ENCODE measurements at regions of chr1 and their contacts with region 1.

Region 1: GRCh38 chr1:47710329-47711071 is 272.7 kb downstream of the FOXD2 start:
- DNase-seq: peak; percentile 37
- ATAC-seq: peak; percentile 93
- H3K4me3 ChIP-seq: no peak overlapping the region
- H3K27ac ChIP-seq: no peak overlapping the region
- H3K4me1 ChIP-seq: no peaks in the 10 kb centered on the region; the same call in 1 of the 2 replicates
- H3K27me3 ChIP-seq: peaks cover 61% of the 10 kb centered on the region
- CTCF ChIP-seq: peak; percentile 95
- POLR2A ChIP-seq: 0 out of 2 replicates have a peak, but pooled peaks have one; percentile 32
- RAD21 ChIP-seq: peak; percentile 95

Region 2: GRCh38 chr1:46910790-46911189 is 799.7 kb before region 1 on chr1:
- CTCF ChIA-PET with region 1: no interaction called
- POLR2A ChIA-PET with region 1: no interaction called
- dilution Hi-C with region 1: no loop called
- in situ Hi-C with region 1: no loop called
- intact Hi-C with region 1: no loop called
- DNase-seq: no peak
- ATAC-seq: no peak
- H3K4me3 ChIP-seq: no peak overlapping the region
- H3K27ac ChIP-seq: no peak overlapping the region
- H3K4me1 ChIP-seq: no peaks in the 10 kb centered on the region
- H3K27me3 ChIP-seq: no peaks in the 10 kb centered on the region
- CTCF ChIP-seq: no peak
- POLR2A ChIP-seq: no peak
- RAD21 ChIP-seq: no peak

Region 3: DNA sequence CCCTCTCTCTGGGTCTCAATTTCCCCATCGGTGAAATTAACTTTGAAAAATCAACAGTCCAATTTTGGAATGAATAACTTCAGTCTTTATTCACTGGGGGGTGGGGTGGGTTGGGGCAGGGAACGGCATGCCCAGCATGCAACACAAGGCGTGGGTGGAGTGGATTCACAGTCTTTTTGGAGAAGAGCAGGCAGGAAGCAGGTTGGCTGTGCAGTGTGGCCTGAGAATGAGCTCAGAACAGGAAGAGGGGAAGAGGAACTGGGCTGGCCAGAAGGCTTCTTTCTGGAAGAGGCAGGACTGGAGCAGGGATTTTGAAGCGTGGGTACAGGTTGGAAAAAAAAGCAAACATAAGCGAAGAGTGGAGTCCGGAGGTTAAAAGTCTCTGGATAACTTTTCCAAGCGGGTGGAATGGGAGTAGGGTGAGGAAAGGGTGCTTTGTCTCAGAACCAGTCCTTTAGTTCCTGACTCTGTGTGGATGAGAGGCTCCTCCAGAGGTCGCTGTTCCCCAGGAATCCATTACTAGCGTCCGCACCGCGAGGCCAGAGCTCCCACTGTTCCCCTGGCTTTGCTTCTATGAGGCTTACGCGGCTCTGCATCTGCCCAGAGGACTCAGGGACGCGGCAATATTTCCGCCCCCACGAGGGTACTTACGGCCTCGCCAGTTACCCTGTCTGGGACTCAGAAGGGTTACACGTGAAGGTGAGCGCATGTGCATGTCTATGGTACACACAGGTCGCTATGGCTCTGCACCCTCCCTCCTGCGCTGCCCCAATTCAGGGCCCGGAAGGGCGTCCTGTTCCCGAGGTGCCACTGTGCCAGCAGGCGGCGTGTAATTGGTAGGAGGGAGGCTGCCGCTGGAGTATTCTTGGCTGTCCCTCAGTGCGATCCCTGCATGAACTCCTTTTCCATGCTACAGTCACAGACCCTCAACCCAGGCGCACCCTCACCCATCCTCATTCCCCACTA is 278.1 kb before region 1 on chr1:
- CTCF ChIA-PET with region 1: interaction called, 15 read pairs
- POLR2A ChIA-PET with region 1: no interaction called
- dilution Hi-C with region 1: no loop called
- in situ Hi-C with region 1: no loop called
- intact Hi-C with region 1: loop called (anchors 1 kb)
- DNase-seq: peak; percentile 79
- ATAC-seq: peak; percentile 67
- H3K4me3 ChIP-seq: no peak overlapping the region
- H3K27ac ChIP-seq: no peak overlapping the region
- H3K4me1 ChIP-seq: peaks cover 12% of the 10 kb centered on the region
- H3K27me3 ChIP-seq: no peaks in the 10 kb centered on the region; the same call in 1 of the 2 replicates
- CTCF ChIP-seq: peak; percentile 89
- POLR2A ChIP-seq: no peak
- RAD21 ChIP-seq: peak; percentile 76

Region 4: DNA sequence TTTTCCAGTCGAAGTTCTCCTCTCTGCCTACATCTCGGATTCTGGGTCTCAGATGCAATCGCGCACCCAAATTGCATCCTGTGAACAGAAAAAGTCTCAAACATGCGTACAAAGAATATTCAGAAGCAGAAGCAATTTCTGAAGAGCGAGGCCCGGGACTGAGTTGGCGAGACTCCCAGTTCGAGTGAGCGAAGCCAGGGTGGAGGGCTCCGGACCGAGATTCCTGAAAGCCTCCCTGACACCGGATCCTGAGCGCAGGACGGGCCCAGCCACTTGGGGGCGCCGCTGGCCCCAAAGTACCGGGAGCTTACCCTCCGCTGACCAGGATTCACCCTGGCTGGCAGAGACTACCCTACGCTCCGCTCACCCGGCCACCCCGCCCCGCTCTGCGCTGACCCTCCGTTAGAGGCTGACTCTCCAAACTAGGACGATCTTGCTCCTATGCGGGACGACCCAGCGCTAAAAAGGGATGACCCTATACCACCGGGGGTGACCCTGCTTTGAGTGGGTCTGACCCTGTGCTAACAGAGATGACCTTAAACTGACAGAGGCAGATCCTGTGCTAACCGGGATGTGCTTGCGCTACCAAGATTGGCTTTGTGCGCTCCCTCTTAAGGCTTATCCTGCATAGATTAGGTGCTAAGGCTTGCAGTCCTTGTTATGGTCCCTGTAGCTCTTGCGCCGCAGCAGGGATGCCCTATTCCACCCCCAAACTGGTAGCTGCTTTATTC is 260.5 kb before region 1 on chr1:
- CTCF ChIA-PET with region 1: interaction called, 6 read pairs
- POLR2A ChIA-PET with region 1: no interaction called
- dilution Hi-C with region 1: no loop called
- in situ Hi-C with region 1: loop called (anchors 5 kb)
- intact Hi-C with region 1: no loop called
- DNase-seq: no peak
- ATAC-seq: peak; percentile 70
- H3K4me3 ChIP-seq: no peak overlapping the region
- H3K27ac ChIP-seq: no peak overlapping the region
- H3K4me1 ChIP-seq: no peaks in the 10 kb centered on the region
- H3K27me3 ChIP-seq: peaks cover 67% of the 10 kb centered on the region
- CTCF ChIP-seq: peak; percentile 39
- POLR2A ChIP-seq: no peak
- RAD21 ChIP-seq: peak; percentile 36

Measured in IMR-90 (cell line).